ENCODE measurements at regions of chr22 and their contacts with region 1.

Region 1: GRCh38 chr22:21593406-21594232 is 26.1 kb downstream of the UBE2L3 start:
- DNase-seq: peak in 1 of 2 experiments; percentile 56
- H3K4me3 ChIP-seq: no peak overlapping the region
- H3K27ac ChIP-seq: no peak overlapping the region
- H3K4me1 ChIP-seq: no peaks in the 10 kb centered on the region
- H3K27me3 ChIP-seq: no peaks in the 10 kb centered on the region
- CTCF ChIP-seq: peak; percentile 66 to 93 (median 85)
- EP300 ChIP-seq: no peak
- POLR2A ChIP-seq: no peak
- RAD21 ChIP-seq: peak; percentile 34 to 52; a peak in 3 of 4 replicates

Region 2: GRCh38 chr22:21573750-21574494 is 19.7 kb before region 1 on chr22:
- CTCF ChIA-PET with region 1: interaction called, 18 read pairs
- POLR2A ChIA-PET with region 1: interaction called, 4 read pairs
- DNase-seq: no peak
- H3K4me3 ChIP-seq: no peak overlapping the region
- H3K27ac ChIP-seq: peak overlapping the region; percentile 36; the same call in 1 of the 2 replicates
- H3K4me1 ChIP-seq: peaks cover 0 to 8% (median 6%) of the 10 kb centered on the region in 4 experiments; a peak in 4 of 7 replicates
- H3K27me3 ChIP-seq: no peaks in the 10 kb centered on the region
- CTCF ChIP-seq: no peak
- EP300 ChIP-seq: no peak
- POLR2A ChIP-seq: no peak
- RAD21 ChIP-seq: no peak

Region 3: DNA sequence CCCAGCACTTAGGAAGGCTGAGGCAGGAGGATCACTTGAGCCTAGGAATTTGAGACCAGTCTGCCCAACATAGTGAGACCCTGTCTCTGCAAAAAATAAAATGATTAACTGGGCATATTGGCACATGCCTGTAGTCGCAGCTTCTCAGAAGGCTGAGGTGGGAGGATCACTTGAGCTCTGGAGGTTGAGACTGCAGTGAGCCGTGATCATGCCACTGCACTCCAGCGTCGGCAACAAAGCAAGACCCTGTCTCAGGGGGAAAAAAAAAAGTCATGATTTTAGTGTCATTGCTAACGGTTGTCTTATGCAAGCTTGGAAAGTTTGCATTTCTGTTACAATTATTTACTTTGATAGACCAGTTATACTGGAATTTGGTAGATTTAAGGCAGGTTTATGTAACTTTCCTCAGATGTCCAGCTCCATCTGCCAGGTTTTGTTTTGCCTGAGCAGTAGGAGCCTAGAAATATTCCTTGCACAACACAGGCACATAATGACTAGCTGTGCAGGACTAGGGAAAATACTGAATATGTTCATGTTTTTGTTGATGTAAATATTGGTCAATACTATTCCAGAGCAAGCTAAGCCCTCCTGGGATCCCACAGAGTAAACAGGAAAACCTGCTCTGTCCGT is 14.0 kb before region 1 on chr22:
- CTCF ChIA-PET with region 1: interaction called, 18 read pairs
- POLR2A ChIA-PET with region 1: no interaction called
- DNase-seq: no peak
- H3K4me3 ChIP-seq: no peak overlapping the region
- H3K27ac ChIP-seq: no peak overlapping the region
- H3K4me1 ChIP-seq: no peaks in the 10 kb centered on the region
- H3K27me3 ChIP-seq: no peaks in the 10 kb centered on the region
- CTCF ChIP-seq: no peak
- EP300 ChIP-seq: no peak
- POLR2A ChIP-seq: no peak
- RAD21 ChIP-seq: no peak

Region 4: GRCh38 chr22:21606775-21607174 is 13.2 kb after region 1 on chr22:
- CTCF ChIA-PET with region 1: interaction called, 21 read pairs
- POLR2A ChIA-PET with region 1: interaction called, 3 read pairs
- DNase-seq: no peak
- H3K4me3 ChIP-seq: no peak overlapping the region
- H3K27ac ChIP-seq: no peak overlapping the region
- H3K4me1 ChIP-seq: no peaks in the 10 kb centered on the region
- H3K27me3 ChIP-seq: no peaks in the 10 kb centered on the region
- CTCF ChIP-seq: no peak
- EP300 ChIP-seq: no peak
- POLR2A ChIP-seq: no peak
- RAD21 ChIP-seq: no peak

Region 5: GRCh38 chr22:21612865-21613265 is 19.2 kb after region 1 on chr22:
- CTCF ChIA-PET with region 1: interaction called, 10 read pairs
- POLR2A ChIA-PET with region 1: interaction called, 3 read pairs
- DNase-seq: no peak
- H3K4me3 ChIP-seq: no peak overlapping the region
- H3K27ac ChIP-seq: no peak overlapping the region
- H3K4me1 ChIP-seq: no peaks in the 10 kb centered on the region
- H3K27me3 ChIP-seq: no peaks in the 10 kb centered on the region
- CTCF ChIP-seq: no peak
- EP300 ChIP-seq: no peak
- POLR2A ChIP-seq: no peak
- RAD21 ChIP-seq: no peak

Region 6: GRCh38 chr22:21624120-21624879 is 30.7 kb after region 1 on chr22:
- CTCF ChIA-PET with region 1: interaction called, 13 read pairs
- POLR2A ChIA-PET with region 1: interaction called, 5 read pairs
- DNase-seq: peak in 1 of 2 experiments; percentile 91
- H3K4me3 ChIP-seq: no peak overlapping the region
- H3K27ac ChIP-seq: no peak overlapping the region
- H3K4me1 ChIP-seq: peaks cover 0 to 3% (median 2%) of the 10 kb centered on the region in 4 experiments; a peak in 4 of 7 replicates
- H3K27me3 ChIP-seq: no peaks in the 10 kb centered on the region
- CTCF ChIP-seq: peak; percentile 66 to 86 (median 79)
- EP300 ChIP-seq: no peak
- POLR2A ChIP-seq: 0 out of 3 replicates have a peak, but pooled peaks of 1 of the 2 experiments have one; percentile 31
- RAD21 ChIP-seq: peak; percentile 37 to 47; a peak in 3 of 4 replicates

Region 7: GRCh38 chr22:21629262-21630149 is 35.9 kb after region 1 on chr22 and contains the start of gene YDJC:
- CTCF ChIA-PET with region 1: interaction called, 12 read pairs
- POLR2A ChIA-PET with region 1: interaction called, 5 read pairs
- DNase-seq: peak; percentile 82 to 96
- H3K4me3 ChIP-seq: peak within 1 kb of the TSS; percentile 52 to 95 (median 86)
- H3K27ac ChIP-seq: peak within 1 kb of the TSS; percentile 77; the same call in 1 of the 2 replicates
- H3K4me1 ChIP-seq: peaks cover 0 to 3% (median 2%) of the 10 kb centered on the region in 4 experiments; a peak in 2 of 7 replicates
- H3K27me3 ChIP-seq: no peaks in the 10 kb centered on the region; a peak in 2 of 7 replicates
- CTCF ChIP-seq: peak; percentile 70 to 89 (median 73)
- EP300 ChIP-seq: no peak
- POLR2A ChIP-seq: peak in 1 of 2 experiments; percentile 82; a peak in 2 of 3 replicates
- RAD21 ChIP-seq: peak; percentile 5 to 37; a peak in 1 of 4 replicates
- total RNA-seq, gene YDJC: 36.5 and 36.7 TPM in 2 replicates

Region 8: DNA sequence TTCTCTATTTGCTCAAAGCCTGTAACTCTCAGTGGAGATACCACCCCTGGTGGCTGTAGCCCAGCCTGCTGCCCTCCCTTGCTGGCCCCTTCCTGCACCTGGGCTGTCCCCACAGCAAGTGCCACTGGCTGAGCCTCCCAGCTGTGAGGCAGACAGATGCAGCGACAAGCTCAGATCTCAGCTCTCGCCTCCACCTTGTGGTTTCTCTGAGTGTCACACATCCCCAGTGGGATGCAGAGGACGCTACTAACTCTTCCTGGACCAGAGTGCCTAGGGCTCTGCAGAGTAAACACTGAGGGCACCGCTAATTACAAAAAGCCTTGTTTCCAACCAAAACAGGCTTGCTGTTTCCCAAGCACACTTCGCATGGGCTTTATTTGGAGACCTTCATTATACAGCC is 133.0 kb after region 1 on chr22:
- CTCF ChIA-PET with region 1: no interaction called
- POLR2A ChIA-PET with region 1: no interaction called
- DNase-seq: peak; percentile 36 to 74
- H3K4me3 ChIP-seq: no peak overlapping the region
- H3K27ac ChIP-seq: no peak overlapping the region
- H3K4me1 ChIP-seq: peaks cover 3 to 5% (median 4%) of the 10 kb centered on the region in 4 experiments; a peak in 6 of 7 replicates
- H3K27me3 ChIP-seq: no peaks in the 10 kb centered on the region
- CTCF ChIP-seq: peak; percentile 69 to 85 (median 70)
- EP300 ChIP-seq: no peak
- POLR2A ChIP-seq: no peak
- RAD21 ChIP-seq: peak; percentile 68 to 77

Measured in H1 (cell line).